Activated naive CD4-positive, alpha-beta T cell treated with anti-CD3 and anti-CD28 coated beads, Interleukin-2, amount 10 ng/mL, durations not matched to agents 7 days and 5 days (primary cell): ENCODE measurements at regions of chr22 and their contacts with region 1.

Region 1: DNA sequence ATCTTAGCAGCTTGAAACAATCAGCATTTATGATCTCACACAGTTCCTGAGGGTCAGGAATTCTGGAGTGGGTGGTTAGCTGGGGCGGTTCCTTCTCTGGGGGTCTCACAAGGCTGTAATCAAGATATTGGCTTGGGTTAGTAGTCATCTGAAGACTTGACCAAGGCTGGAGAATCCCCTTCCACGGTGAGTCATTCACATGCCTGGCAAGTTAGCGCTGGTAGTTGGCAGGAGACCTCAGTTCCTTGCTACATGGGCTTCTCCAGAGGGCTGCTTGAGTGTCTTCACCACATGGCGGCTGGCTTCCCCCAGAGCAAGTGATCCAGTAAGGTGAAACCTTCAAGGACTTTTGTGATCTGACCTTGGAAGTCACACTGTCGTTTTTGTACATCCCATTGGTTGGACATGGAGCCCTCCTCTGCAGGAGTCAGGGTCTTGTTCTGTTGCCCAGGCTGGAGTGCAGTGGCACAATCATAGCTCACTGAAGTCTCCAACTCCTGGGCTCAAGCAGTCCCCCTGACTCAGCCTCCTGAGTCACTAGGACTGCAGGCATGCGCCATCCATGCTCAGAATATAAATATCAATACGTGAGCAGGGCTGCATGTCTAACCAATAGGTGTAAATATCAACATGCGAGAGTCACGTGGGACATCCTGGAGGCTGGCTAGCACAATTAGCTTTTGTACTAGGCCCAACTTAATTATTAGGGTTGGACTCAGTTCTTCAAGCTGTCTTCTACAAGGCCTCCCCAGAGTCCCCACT is 7.2 kb upstream of the NIPSNAP1 start:
- DNase-seq: no peak
- H3K4me3 Mint-ChIP-seq: no peak overlapping the region
- H3K27ac Mint-ChIP-seq: no peak overlapping the region
- H3K4me1 Mint-ChIP-seq: peaks cover 10% of the 10 kb centered on the region
- H3K27me3 Mint-ChIP-seq: peaks cover 4% of the 10 kb centered on the region

Region 2: DNA sequence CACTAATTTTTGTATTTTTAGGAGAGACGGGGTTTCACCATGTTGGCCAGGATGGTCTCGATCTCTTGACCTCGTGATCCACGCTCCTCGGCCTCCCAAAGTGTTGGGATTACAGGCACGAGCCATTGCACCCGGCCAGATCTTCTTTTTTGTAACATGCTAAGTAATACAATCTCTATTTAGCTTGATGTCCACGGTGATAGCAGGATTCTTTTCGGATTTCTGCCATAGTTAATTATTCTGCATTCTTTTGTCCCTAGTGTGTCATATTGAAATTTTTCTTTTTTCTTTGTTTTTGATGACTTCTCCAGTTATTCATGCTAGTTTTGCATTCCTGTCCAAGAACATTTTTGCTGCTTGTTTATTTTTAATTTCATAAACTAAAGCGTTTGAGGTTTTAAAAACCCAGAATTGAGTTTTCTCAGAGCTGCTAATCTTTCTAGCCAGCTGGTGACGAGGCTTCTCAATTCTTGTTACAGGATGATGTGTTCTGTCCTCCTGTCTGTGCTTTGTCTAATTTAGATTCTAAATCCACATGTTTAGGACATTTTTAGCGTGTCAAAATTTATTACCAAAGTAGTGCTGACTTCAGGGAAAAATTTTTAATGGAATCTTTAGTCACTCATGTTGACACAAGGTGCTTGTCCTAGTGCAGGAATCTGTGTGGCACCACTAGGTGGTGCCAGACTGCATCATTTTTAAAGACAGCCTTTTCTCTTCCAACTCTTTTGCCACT is 37.1 kb after region 1 on chr22:
- CTCF ChIA-PET with region 1: interaction called, 21 read pairs
- DNase-seq: peak; percentile 50
- H3K4me3 Mint-ChIP-seq: no peak overlapping the region
- H3K27ac Mint-ChIP-seq: no peak overlapping the region
- H3K4me1 Mint-ChIP-seq: peaks cover 58% of the 10 kb centered on the region
- H3K27me3 Mint-ChIP-seq: no peaks in the 10 kb centered on the region